Activated CD4-positive, alpha-beta T cell treated with anti-CD3 and anti-CD28 coated beads, Interleukin-2, amount 10 ng/mL, durations not matched to agents 24 days and 14 days (primary cell): ENCODE measurements at regions of chr4 and their contacts with region 1.

Region 1: GRCh38 chr4:174222266-174222872 is 61.1 kb downstream of the FBXO8 start:
- DNase-seq: peak; percentile 66
- H3K4me3 Mint-ChIP-seq: no peak overlapping the region
- H3K27ac Mint-ChIP-seq: no peak overlapping the region
- H3K4me1 Mint-ChIP-seq: peaks cover 10% of the 10 kb centered on the region
- H3K27me3 Mint-ChIP-seq: peaks cover 61% of the 10 kb centered on the region

Region 2: GRCh38 chr4:173529477-173530325 is 692.7 kb before region 1 on chr4 and contains the start of gene HAND2:
- intact Hi-C with region 1: loop called (anchors 2 kb)
- DNase-seq: no peak
- H3K4me3 Mint-ChIP-seq: peak within 1 kb of the TSS; percentile 28
- H3K27ac Mint-ChIP-seq: peak within 1 kb of the TSS; percentile 71
- H3K4me1 Mint-ChIP-seq: peaks cover 8% of the 10 kb centered on the region
- H3K27me3 Mint-ChIP-seq: peaks cover 85% of the 10 kb centered on the region
- total RNA-seq, gene HAND2: not detected in 2 replicates

Region 3: GRCh38 chr4:173827707-173828106 is 394.7 kb before region 1 on chr4:
- intact Hi-C with region 1: no loop called
- DNase-seq: no peak
- H3K4me3 Mint-ChIP-seq: no peak overlapping the region
- H3K27ac Mint-ChIP-seq: no peak overlapping the region
- H3K4me1 Mint-ChIP-seq: no peaks in the 10 kb centered on the region
- H3K27me3 Mint-ChIP-seq: no peaks in the 10 kb centered on the region

Region 4: GRCh38 chr4:174318829-174319764 is 96.7 kb after region 1 on chr4:
- intact Hi-C with region 1: loop called (anchors 1 kb)
- DNase-seq: peak; percentile 60
- H3K4me3 Mint-ChIP-seq: no peak overlapping the region
- H3K27ac Mint-ChIP-seq: no peak overlapping the region
- H3K4me1 Mint-ChIP-seq: no peaks in the 10 kb centered on the region
- H3K27me3 Mint-ChIP-seq: no peaks in the 10 kb centered on the region

Region 5: DNA sequence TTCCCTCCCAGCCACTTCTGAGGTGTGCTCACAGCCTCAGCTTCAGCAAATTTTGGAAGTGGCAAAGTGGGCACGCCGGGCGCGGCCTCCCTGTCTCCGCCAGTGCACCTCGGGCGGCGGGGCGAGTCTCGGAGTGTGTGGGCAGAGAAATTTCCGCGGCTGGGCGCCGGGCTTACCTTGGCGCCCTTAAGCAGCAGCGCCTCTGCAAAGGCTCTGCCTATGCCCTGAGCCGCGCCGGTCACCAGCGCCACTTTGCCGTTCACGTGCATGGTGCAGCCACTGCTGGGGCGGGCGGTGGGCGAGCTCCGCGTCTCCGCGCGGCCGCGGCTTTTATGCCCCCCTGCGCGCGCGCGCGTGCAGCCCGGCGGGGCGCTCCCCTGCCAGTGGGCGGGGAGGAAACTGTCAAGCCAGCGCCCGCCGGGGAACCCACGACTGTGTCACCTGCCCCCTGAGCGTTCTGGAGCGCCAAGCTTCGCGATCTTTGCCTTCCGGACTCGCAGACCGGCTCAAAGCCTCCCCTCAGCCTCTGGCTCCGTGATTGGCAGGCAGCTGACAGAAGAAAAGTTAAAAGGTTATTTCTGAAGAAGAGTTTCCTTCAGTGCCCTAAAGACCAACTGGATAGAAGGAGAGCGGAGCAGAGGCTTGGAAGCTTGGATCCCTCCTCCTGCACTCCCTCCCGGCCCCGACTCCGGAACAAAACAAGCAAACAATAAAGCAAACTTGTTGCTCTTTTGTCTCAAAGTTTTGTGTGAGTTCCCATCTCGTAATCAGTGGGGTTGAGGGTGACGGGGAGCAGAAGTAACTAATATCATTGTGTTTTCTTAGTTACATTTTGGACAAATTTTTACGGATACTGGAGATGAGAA is 300.0 kb after region 1 on chr4 and contains the start of gene HPGD:
- intact Hi-C with region 1: loop called (anchors 10 kb)
- DNase-seq: peak; percentile 87
- H3K4me3 Mint-ChIP-seq: peak within 1 kb of the TSS; percentile 82
- H3K27ac Mint-ChIP-seq: peak within 1 kb of the TSS; percentile 38
- H3K4me1 Mint-ChIP-seq: peaks cover 12% of the 10 kb centered on the region
- H3K27me3 Mint-ChIP-seq: peaks cover 45% of the 10 kb centered on the region
- total RNA-seq, gene HPGD: 1.1 and 1.4 TPM in 2 replicates

Region 6: DNA sequence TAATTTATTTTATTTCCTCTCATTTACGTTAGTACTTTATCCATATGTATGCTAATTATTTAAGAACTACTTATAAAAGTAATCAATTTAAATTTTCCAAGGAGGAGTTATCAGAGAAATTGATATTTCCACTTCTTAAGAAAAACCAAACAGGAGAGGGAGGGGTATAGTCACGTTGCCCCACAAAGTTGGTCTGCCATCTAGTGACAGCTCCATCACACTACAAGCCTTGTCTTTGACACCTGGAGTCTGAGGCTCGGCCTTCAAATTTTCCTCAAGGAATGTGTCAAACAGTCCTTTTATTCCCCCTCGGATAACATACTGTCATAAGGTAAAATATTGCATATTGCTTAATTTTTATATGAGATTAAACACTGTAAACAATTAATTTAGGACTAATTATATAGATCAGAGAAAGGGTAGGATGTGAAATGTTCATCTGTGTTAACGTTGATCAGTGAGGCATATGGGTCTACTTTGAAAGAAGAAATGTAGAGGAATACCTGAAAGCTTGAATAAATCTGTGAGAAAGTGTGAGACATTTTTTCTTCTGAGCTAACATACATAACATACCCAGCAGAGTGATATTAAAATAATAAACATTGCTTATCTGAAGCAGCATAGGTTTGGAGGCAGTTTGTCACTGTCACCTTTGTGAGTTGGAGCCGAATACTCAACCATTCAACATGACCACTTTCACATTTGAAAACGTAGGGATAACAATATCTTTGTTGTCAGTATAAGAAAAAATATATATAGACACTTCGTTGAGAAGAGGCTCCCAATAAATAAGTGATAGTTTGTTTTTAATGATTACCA is 492.2 kb after region 1 on chr4:
- intact Hi-C with region 1: loop called (anchors 10 kb)
- DNase-seq: peak; percentile 71
- H3K4me3 Mint-ChIP-seq: no peak overlapping the region
- H3K27ac Mint-ChIP-seq: no peak overlapping the region
- H3K4me1 Mint-ChIP-seq: no peaks in the 10 kb centered on the region
- H3K27me3 Mint-ChIP-seq: peaks cover 6% of the 10 kb centered on the region

Region 7: DNA sequence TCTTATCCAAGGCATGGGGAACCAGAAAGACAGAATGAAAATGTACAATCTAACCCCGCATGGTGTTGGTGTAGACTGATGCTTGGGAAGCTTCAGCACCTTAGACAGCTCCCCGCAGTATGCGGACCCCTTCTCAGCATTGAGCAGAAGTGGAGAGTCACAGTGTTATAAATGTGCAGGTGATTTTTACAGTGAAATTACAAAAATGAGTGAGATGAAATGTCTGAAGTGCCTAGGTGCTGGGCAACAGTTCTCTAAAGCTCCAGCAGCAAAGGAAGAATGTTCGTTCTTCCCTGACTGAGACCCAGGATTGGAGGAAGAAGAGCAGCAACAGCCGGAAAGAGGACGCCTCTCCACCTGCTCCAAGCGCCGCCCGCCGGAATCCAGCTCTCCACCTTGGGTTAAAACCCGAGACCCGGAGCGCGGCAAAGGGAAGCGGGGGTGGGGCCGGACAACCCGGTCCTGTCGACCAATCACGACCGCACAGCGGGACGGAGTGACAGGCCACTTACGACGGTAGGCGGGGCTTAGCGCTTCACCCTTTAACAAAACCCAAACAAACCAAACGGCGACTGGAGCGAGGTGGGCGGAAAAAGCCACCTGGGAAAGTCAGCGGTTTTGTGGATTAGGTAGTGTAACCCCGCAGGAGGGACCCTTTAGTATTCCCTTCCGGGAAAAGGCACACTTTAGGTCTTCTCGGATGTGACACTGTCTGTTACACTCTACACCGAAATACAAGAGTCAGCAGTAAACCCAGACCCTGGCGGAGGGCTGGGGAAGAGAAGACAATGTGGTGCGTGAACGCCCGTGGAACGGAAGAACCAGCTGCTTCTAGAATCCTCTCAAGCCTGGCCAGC is 606.7 kb after region 1 on chr4 and contains the start of gene GLRA3:
- intact Hi-C with region 1: loop called (anchors 10 kb)
- DNase-seq: peak; percentile 66
- H3K4me3 Mint-ChIP-seq: peak within 1 kb of the TSS; percentile 12
- H3K27ac Mint-ChIP-seq: no peak within 1 kb of the TSS
- H3K4me1 Mint-ChIP-seq: peaks cover 5% of the 10 kb centered on the region
- H3K27me3 Mint-ChIP-seq: peaks cover 7% of the 10 kb centered on the region
- total RNA-seq, gene GLRA3: not detected in 2 replicates